Spleen (tissue), 13 donors: ENCODE measurements at regions of chr1 and their contacts with region 1.

Region 1: DNA sequence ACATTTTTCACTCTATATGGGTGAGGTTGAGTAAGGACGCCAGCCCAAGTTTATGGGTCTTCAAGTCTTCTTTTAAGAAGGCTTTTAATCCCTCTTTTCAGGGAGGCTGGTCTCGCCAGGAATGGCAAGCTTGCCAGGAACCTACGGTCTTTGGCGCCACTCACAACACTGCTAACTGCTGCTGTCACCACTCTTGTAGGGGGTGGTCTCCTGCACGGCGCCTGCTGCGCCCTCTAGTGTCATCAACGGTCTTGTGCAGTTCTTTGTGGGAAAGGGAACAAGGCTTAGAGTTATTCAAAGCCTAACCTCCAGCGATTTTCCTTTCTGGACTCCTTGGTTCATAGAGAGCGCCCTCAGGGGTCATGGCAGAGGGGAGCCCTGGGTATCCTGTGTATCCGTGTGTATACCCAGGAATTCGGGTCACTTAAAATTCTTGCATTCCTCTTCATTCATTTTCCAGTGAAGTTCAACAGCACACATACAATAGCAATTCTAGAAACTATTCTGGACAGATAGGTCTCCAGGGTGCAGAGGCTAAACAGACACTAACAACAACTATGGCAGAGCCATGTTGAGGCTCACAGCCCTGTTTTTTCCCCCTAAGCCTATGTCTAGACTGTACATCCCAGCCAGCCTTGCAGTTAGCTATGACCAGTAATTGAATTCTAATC is 392.8 kb upstream of the CAMK1G start:
- DNase-seq: no peak
- H3K4me3 ChIP-seq: no peak overlapping the region
- H3K27ac ChIP-seq: no peak overlapping the region
- H3K4me1 ChIP-seq: no peaks in the 10 kb centered on the region
- H3K27me3 ChIP-seq: peaks cover 0 to 9% (median 0%) of the 10 kb centered on the region in 7 donors
- CTCF ChIP-seq: peak in 9 of 11 experiments; percentile 15 to 73 (median 53)
- POLR2A ChIP-seq: no peak

Region 2: DNA sequence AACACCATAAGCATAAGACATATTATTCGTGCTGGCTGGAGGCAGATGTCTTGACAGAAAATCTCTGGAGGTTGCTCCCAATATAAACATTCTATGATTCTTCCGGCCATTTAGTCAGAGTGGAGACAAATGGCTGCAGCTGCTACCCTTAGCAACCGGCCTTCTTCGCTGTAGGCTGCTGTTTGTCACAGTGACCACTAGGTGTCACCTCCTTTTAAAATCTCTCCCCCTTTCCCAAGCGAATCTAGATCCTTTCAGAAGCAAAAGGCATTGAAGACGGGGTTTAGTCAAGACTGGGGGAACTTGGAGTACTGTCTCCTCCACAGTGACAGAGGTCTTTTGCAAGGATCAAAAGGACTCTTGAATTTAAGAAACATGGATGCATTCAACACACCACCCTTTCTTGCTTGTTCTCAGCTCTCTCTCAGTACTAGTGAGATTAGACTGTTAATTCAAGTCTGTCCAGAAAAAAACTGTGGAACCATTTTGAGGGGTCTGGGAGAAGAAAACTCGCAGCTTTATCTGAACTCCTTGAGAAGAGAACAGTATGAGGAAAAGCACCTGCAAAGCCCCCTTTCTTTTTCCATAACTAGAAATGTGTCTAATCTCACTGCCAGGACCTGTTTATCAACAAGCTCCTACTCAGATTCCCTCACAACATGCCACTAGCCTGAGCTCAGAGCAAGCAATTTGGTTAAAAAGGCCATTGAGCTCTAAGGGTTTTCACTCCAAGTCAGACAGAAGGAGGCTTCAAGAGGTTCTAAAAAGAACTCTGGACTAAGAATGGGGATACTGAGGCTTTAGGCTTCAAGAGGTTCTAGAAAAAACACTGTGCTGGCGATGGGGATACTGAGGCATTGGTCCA is 538.2 kb before region 1 on chr1:
- intact Hi-C with region 1: loop called (anchors 5 kb)
- DNase-seq: no peak
- H3K4me3 ChIP-seq: no peak overlapping the region
- H3K27ac ChIP-seq: no peak overlapping the region
- H3K4me1 ChIP-seq: no peaks in the 10 kb centered on the region
- H3K27me3 ChIP-seq: peaks cover 0 to 49% (median 7%) of the 10 kb centered on the region in 7 donors
- CTCF ChIP-seq: peak; percentile 59 to 91 (median 78)
- POLR2A ChIP-seq: no peak

Region 3: GRCh38 chr1:209143916-209144315 is 46.8 kb before region 1 on chr1:
- intact Hi-C with region 1: no loop called
- DNase-seq: no peak
- H3K4me3 ChIP-seq: no peak overlapping the region
- H3K27ac ChIP-seq: no peak overlapping the region
- H3K4me1 ChIP-seq: no peaks in the 10 kb centered on the region
- H3K27me3 ChIP-seq: no peaks in the 10 kb centered on the region
- CTCF ChIP-seq: no peak
- POLR2A ChIP-seq: no peak

Region 4: GRCh38 chr1:209248649-209249279 is 58.0 kb after region 1 on chr1:
- intact Hi-C with region 1: no loop called
- DNase-seq: no peak
- H3K4me3 ChIP-seq: no peak overlapping the region
- H3K27ac ChIP-seq: no peak overlapping the region
- H3K4me1 ChIP-seq: peaks cover 0 to 5% (median 0%) of the 10 kb centered on the region in 6 donors
- H3K27me3 ChIP-seq: peaks cover 0 to 3% (median 0%) of the 10 kb centered on the region in 7 donors
- CTCF ChIP-seq: peak; percentile 42 to 88 (median 83)
- POLR2A ChIP-seq: no peak